GM10248 (cell line): ENCODE measurements at regions of chr2 and their contacts with region 1.

Region 1: GRCh38 chr2:26555246-26556133 is 77.6 kb upstream of the OTOF start:
- DNase-seq: no peak
- CTCF ChIP-seq: no peak

Region 2: GRCh38 chr2:26542194-26542455 is 13.4 kb before region 1 on chr2:
- CTCF ChIA-PET with region 1: interaction called, 10 read pairs
- POLR2A ChIA-PET with region 1: no interaction called
- DNase-seq: no peak
- CTCF ChIP-seq: no peak